MCF 10A (cell line): ENCODE measurements at regions of chr2 and their contacts with region 1.

Region 1: GRCh38 chr2:223797811-223798721 is 39.3 kb downstream of the AP1S3 start:
- DNase-seq: peak; percentile 73
- H3K4me3 Mint-ChIP-seq: no peak overlapping the region
- H3K27ac Mint-ChIP-seq: peak overlapping the region; percentile 81
- H3K4me1 Mint-ChIP-seq: peaks cover 30% of the 10 kb centered on the region
- H3K27me3 Mint-ChIP-seq: no peaks in the 10 kb centered on the region
- CTCF ChIP-seq: peak; percentile 58

Region 2: GRCh38 chr2:223101340-223102039 is 696.6 kb before region 1 on chr2:
- CTCF ChIA-PET with region 1: no interaction called
- POLR2A ChIA-PET with region 1: no interaction called
- intact Hi-C with region 1: loop called (anchors 10 kb)
- DNase-seq: peak; percentile 93
- H3K4me3 Mint-ChIP-seq: no peak overlapping the region
- H3K27ac Mint-ChIP-seq: no peak overlapping the region
- H3K4me1 Mint-ChIP-seq: peaks cover 13% of the 10 kb centered on the region
- H3K27me3 Mint-ChIP-seq: no peaks in the 10 kb centered on the region
- CTCF ChIP-seq: peak; percentile 59

Region 3: GRCh38 chr2:223674998-223675609 is 123.0 kb before region 1 on chr2:
- CTCF ChIA-PET with region 1: interaction called, 54 read pairs
- POLR2A ChIA-PET with region 1: interaction called, 6 read pairs
- intact Hi-C with region 1: loop called (anchors 1 kb)
- DNase-seq: peak; percentile 71
- H3K4me3 Mint-ChIP-seq: no peak overlapping the region
- H3K27ac Mint-ChIP-seq: peak overlapping the region; percentile 42
- H3K4me1 Mint-ChIP-seq: peaks cover 9% of the 10 kb centered on the region
- H3K27me3 Mint-ChIP-seq: no peaks in the 10 kb centered on the region
- CTCF ChIP-seq: peak; percentile 77

Region 4: GRCh38 chr2:223760838-223761502 is 37.1 kb before region 1 on chr2:
- CTCF ChIA-PET with region 1: interaction called, 42 read pairs
- POLR2A ChIA-PET with region 1: interaction called, 58 read pairs
- intact Hi-C with region 1: loop called (anchors 1 kb)
- DNase-seq: peak; percentile 98
- H3K4me3 Mint-ChIP-seq: no peak overlapping the region
- H3K27ac Mint-ChIP-seq: peak overlapping the region; percentile 94
- H3K4me1 Mint-ChIP-seq: peaks cover 27% of the 10 kb centered on the region
- H3K27me3 Mint-ChIP-seq: no peaks in the 10 kb centered on the region
- CTCF ChIP-seq: peak; percentile 24

Region 5: DNA sequence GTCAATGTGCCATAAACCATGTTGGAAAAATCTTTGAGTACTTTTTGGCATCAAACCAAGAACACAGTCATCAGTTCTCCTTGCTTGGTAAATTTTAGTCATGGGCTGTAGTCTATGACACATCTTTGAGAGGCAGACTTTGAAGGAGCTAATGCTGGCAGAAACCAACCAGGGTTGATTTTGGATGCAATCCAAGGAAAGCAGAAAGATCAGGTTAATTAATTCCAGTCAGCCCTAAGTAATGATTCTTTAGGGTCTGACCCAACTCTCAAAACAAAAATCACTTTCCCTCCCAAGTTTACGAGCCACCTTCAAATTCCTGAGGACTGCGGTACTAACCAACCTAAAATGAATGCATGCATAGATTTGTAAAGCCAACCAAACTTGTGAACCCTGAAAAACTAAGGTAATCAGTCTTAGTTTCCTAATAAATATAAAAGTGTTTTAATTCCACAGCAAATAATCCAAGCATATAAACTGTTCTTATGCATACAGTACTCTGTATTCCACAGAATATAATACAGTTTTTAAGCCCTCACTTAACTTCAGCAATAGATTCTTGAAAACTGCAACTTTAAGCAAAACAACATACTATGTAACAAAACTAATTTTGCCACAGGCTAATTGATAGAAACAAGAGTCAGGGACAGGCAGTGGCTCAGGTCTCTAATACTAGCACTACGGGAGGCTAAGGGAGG is 17.3 kb after region 1 on chr2:
- CTCF ChIA-PET with region 1: interaction called, 13 read pairs
- POLR2A ChIA-PET with region 1: interaction called, 13 read pairs
- intact Hi-C with region 1: no loop called
- DNase-seq: peak; percentile 91
- H3K4me3 Mint-ChIP-seq: peak overlapping the region; percentile 48
- H3K27ac Mint-ChIP-seq: peak overlapping the region; percentile 53
- H3K4me1 Mint-ChIP-seq: peaks cover 17% of the 10 kb centered on the region
- H3K27me3 Mint-ChIP-seq: no peaks in the 10 kb centered on the region
- CTCF ChIP-seq: no peak